ENCODE measurements at regions of chr15 and their contacts with region 1.

Region 1: DNA sequence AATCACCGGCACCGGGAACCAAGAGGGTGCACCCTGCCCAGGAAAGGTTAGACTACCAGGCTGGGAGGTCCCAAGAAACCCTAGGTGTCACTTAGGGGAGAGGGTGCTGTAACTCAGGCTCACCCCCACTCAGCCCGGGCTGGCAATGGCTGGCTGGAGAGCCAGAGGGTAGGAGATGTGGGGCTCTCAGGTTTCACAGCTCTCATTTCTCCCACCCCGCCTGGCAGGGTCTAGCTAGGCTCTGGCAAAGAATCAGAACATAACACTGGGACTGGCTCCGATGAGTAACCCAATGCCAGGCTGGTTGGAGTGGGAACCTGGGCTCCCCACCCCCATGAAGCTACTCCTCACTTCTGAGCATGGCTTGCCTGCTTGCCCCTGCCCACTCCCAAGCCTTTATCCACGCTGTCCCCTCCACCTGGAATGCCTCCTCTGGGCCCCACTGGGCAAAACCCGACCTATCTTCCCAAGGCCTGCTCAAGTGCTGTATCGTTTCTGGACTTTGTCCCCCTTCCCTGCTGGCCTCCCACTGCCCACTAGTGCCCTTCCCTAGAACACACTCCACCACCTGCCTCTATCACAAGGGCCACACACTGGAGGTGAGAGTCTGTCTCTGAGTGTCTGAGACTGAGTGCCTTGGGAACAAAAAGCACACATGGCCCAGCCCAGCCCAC is 2.0 kb downstream of the CIB2 start:
- DNase-seq: peak; percentile 37 to 72
- ATAC-seq: peak; percentile 65 to 78 (median 68)
- H3K4me3 ChIP-seq: peak overlapping the region; percentile 4
- H3K27ac ChIP-seq: peak overlapping the region; percentile 46
- H3K4me1 ChIP-seq: peaks cover 19% of the 10 kb centered on the region
- H3K27me3 ChIP-seq: no peaks in the 10 kb centered on the region
- CTCF ChIP-seq: no peak

Region 2: DNA sequence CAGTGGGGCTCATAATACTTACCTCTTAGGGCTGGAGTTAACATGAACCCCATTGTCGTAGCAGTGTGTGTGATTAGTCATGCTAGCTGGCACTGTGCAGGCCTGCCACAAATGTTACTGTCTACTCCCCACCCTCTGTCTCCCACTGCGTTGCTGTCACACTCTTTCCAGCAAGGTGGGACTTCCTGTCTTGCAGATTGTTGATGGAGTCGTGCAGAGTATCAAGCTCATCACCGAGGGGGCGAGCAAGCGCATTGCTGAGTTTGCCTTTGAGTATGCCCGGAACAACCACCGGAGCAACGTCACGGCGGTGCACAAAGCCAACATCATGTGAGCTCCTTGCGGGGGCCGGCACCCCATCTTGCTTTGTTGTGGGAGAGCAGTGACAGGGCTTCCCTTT is 32.8 kb after region 1 on chr15:
- intact Hi-C with region 1: loop called in 1 of 2 experiments (anchors 5 kb)
- DNase-seq: no peak
- ATAC-seq: peak in 2 of 4 donors; percentile 49 to 54
- H3K4me3 ChIP-seq: no peak overlapping the region
- H3K27ac ChIP-seq: no peak overlapping the region
- H3K4me1 ChIP-seq: peaks cover 8% of the 10 kb centered on the region
- H3K27me3 ChIP-seq: no peaks in the 10 kb centered on the region
- CTCF ChIP-seq: no peak

Region 3: GRCh38 chr15:78177447-78177873 is 48.2 kb after region 1 on chr15:
- intact Hi-C with region 1: no loop called
- DNase-seq: peak in 1 of 2 donors; percentile 68
- ATAC-seq: peak; percentile 55 to 83 (median 64)
- H3K4me3 ChIP-seq: no peak overlapping the region
- H3K27ac ChIP-seq: no peak overlapping the region
- H3K4me1 ChIP-seq: no peaks in the 10 kb centered on the region
- H3K27me3 ChIP-seq: no peaks in the 10 kb centered on the region
- CTCF ChIP-seq: peak; percentile 64

Region 4: DNA sequence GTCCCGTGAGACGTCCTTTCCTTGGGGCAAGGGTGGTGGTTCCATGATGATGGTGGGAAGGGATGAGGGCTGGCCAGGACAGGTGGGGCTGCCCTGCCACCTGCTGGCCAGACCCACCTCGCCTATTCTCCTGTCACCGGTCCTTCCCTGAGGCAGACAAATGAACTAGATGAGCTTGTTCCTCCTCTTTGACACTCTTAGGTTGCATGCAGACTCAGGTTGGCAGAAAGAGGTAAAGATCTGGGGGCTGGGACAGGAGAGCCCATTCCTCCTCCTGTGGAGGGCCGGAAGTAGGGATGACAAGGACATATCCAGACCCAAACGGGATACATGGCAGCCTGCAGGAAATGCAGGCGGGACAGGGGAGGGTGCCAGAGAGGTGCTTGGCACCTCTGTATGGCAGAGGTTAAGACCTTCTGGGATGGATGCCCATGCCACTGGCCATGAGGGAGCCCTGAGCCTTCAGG is 66.6 kb after region 1 on chr15:
- intact Hi-C with region 1: loop called in 1 of 2 experiments (anchors 5 kb)
- DNase-seq: peak in 1 of 2 donors; percentile 56
- ATAC-seq: peak; percentile 84 to 93 (median 88)
- H3K4me3 ChIP-seq: no peak overlapping the region
- H3K27ac ChIP-seq: no peak overlapping the region
- H3K4me1 ChIP-seq: no peaks in the 10 kb centered on the region
- H3K27me3 ChIP-seq: no peaks in the 10 kb centered on the region
- CTCF ChIP-seq: peak; percentile 73

Measured in psoas muscle (tissue), 8 donors.